CD8-positive, alpha-beta T cell (primary cell): ENCODE measurements at regions of chr9 and their contacts with region 1.

Region 1: DNA sequence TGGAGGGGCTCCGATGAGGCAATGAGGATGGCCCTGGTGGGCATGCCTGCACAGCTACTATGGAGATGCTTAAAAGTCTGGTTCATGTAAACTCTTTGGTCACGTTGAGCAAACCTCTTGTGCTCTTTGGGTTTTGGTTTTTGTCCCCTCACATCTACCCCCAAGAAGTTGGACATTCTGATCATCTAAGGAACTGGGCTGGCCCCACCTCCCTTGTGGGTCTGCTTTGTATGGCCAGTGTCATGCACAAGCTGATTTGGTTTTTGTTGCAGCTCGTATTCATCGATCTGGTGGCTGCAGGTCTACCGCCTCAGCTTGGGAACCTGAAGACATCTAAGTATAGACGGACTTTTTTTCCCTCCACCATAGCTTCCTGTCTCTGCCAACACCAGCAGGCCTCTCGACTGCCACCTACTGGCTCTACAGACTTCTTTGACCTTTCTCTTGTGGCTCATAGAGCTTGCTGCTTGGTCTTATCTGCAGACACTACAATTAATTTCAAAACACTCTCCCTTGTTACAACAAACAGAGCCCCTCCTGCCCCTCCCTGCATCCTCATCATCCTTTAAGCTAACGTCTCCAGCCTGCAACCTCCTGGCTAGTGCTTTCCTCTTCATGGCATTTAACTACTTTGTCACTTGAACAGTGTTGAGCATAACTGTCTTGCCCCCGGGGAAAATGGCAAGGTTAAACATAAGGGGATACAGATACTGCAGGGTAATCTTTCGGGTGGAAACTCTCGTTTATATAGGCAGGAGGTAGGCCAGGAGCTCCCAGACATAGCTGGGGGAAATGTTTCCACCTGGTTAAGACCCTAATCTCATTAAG is 34.5 kb downstream of the TSTD2 start:
- DNase-seq: peak; percentile 46 to 84 (median 72)
- ATAC-seq: peak; percentile 97
- H3K4me3 ChIP-seq: no peak overlapping the region
- H3K4me3 Mint-ChIP-seq: peak overlapping the region; percentile 59
- H3K27ac ChIP-seq: no peak overlapping the region
- H3K27ac Mint-ChIP-seq: no peak overlapping the region
- H3K4me1 ChIP-seq: no peaks in the 10 kb centered on the region
- H3K4me1 Mint-ChIP-seq: peaks cover 7% of the 10 kb centered on the region
- H3K27me3 ChIP-seq: no peaks in the 10 kb centered on the region
- H3K27me3 Mint-ChIP-seq: no peaks in the 10 kb centered on the region
- CTCF ChIP-seq: peak; percentile 77

Region 2: GRCh38 chr9:97468658-97469448 is 129.8 kb before region 1 on chr9:
- CTCF ChIA-PET with region 1: interaction called, 53 read pairs
- POLR2A ChIA-PET with region 1: no interaction called
- intact Hi-C with region 1: loop called in 1 of 2 experiments (anchors 1 kb)
- DNase-seq: peak in 6 of 9 experiments; percentile 12 to 50 (median 32)
- ATAC-seq: no peak
- H3K4me3 ChIP-seq: no peak overlapping the region
- H3K4me3 Mint-ChIP-seq: no peak overlapping the region
- H3K27ac ChIP-seq: no peak overlapping the region
- H3K27ac Mint-ChIP-seq: peak overlapping the region; percentile 20
- H3K4me1 ChIP-seq: no peaks in the 10 kb centered on the region
- H3K4me1 Mint-ChIP-seq: no peaks in the 10 kb centered on the region
- H3K27me3 ChIP-seq: no peaks in the 10 kb centered on the region
- H3K27me3 Mint-ChIP-seq: no peaks in the 10 kb centered on the region
- CTCF ChIP-seq: peak; percentile 11

Region 3: DNA sequence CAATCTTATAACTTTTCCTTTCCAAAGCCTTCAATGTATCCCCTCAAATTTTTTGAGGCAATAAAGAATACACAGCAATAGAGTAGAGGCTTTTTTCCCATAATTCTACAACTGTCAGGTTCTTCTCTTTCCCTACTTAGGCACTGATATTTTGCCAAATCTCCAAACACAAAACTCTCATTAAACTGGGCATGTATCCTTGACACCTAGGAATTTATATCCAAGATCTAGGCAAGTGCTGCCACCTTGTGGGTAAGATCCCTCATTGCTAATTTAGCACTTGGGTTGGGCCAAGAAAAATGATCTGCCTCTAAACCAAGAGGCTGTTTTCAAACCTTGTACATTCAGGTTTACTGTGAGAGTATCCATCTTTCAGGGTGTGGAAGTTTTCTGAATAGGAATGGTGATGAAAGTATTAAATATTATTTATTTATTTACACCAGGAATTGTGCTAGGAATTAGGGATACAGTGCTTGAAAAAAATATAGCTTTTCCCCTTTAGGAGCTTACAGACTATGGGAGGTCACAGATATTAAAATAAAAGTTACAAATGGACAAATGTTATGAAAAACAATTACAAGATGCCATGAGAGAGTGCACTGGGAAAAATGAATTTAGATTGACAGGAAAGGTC is 16.9 kb after region 1 on chr9:
- CTCF ChIA-PET with region 1: interaction called, 26 read pairs
- POLR2A ChIA-PET with region 1: interaction called, 3 read pairs
- intact Hi-C with region 1: no loop called
- DNase-seq: peak in 8 of 9 experiments; percentile 22 to 74 (median 58)
- ATAC-seq: peak; percentile 67
- H3K4me3 ChIP-seq: no peak overlapping the region
- H3K4me3 Mint-ChIP-seq: no peak overlapping the region
- H3K27ac ChIP-seq: no peak overlapping the region
- H3K27ac Mint-ChIP-seq: no peak overlapping the region
- H3K4me1 ChIP-seq: no peaks in the 10 kb centered on the region
- H3K4me1 Mint-ChIP-seq: peaks cover 2% of the 10 kb centered on the region
- H3K27me3 ChIP-seq: no peaks in the 10 kb centered on the region
- H3K27me3 Mint-ChIP-seq: no peaks in the 10 kb centered on the region
- CTCF ChIP-seq: peak; percentile 97

Region 4: GRCh38 chr9:97710356-97711222 is 111.9 kb after region 1 on chr9:
- CTCF ChIA-PET with region 1: no interaction called
- POLR2A ChIA-PET with region 1: no interaction called
- intact Hi-C with region 1: no loop called
- DNase-seq: peak in 8 of 9 experiments; percentile 20 to 79 (median 50)
- ATAC-seq: peak; percentile 74
- H3K4me3 ChIP-seq: no peak overlapping the region
- H3K4me3 Mint-ChIP-seq: peak overlapping the region; percentile 35
- H3K27ac ChIP-seq: no peak overlapping the region
- H3K27ac Mint-ChIP-seq: peak overlapping the region; percentile 45
- H3K4me1 ChIP-seq: peaks cover 24% of the 10 kb centered on the region
- H3K4me1 Mint-ChIP-seq: peaks cover 32% of the 10 kb centered on the region
- H3K27me3 ChIP-seq: no peaks in the 10 kb centered on the region
- H3K27me3 Mint-ChIP-seq: peaks cover 8% of the 10 kb centered on the region
- CTCF ChIP-seq: peak; percentile 96